Caco-2 (cell line): ENCODE measurements at regions of chr17 and their contacts with region 1.

Region 1: DNA sequence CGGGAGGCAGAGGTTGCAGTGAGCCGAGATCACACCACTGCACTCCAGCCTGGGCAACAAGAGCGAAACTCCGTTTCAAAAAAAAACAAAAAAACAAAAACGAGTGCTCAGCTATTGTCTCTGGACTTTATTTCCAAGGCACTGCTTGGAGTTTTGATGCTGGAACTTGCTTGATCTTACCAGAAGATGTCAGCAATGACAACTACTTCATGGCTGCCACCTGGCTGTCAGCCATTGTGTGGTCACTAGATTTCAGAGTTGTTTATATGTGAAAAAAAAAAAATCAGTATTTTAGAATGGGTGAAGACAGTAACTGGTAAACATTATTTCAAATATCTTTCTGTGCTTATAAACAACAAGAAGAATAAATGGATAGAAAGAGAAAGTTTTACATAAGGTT is 26.3 kb upstream of the OR4D1 start:
- DNase-seq: peak; percentile 46 to 56
- H3K4me3 ChIP-seq: no peak overlapping the region
- H3K4me3 Mint-ChIP-seq: no peak overlapping the region
- H3K27ac Mint-ChIP-seq: no peak overlapping the region
- H3K4me1 ChIP-seq: no peaks in the 10 kb centered on the region
- H3K4me1 Mint-ChIP-seq: no peaks in the 10 kb centered on the region
- H3K27me3 ChIP-seq: no peaks in the 10 kb centered on the region
- H3K27me3 Mint-ChIP-seq: peaks cover 17% of the 10 kb centered on the region
- CTCF ChIP-seq: peak; percentile 53 to 75

Region 2: GRCh38 chr17:58109196-58109595 is 12.7 kb before region 1 on chr17:
- CTCF ChIA-PET with region 1: no interaction called
- POLR2A ChIA-PET with region 1: no interaction called
- intact Hi-C with region 1: no loop called
- DNase-seq: no peak
- H3K4me3 ChIP-seq: no peak overlapping the region
- H3K4me3 Mint-ChIP-seq: no peak overlapping the region
- H3K27ac Mint-ChIP-seq: no peak overlapping the region
- H3K4me1 ChIP-seq: no peaks in the 10 kb centered on the region
- H3K4me1 Mint-ChIP-seq: no peaks in the 10 kb centered on the region
- H3K27me3 ChIP-seq: no peaks in the 10 kb centered on the region
- H3K27me3 Mint-ChIP-seq: peaks cover 3% of the 10 kb centered on the region
- CTCF ChIP-seq: no peak

Region 3: DNA sequence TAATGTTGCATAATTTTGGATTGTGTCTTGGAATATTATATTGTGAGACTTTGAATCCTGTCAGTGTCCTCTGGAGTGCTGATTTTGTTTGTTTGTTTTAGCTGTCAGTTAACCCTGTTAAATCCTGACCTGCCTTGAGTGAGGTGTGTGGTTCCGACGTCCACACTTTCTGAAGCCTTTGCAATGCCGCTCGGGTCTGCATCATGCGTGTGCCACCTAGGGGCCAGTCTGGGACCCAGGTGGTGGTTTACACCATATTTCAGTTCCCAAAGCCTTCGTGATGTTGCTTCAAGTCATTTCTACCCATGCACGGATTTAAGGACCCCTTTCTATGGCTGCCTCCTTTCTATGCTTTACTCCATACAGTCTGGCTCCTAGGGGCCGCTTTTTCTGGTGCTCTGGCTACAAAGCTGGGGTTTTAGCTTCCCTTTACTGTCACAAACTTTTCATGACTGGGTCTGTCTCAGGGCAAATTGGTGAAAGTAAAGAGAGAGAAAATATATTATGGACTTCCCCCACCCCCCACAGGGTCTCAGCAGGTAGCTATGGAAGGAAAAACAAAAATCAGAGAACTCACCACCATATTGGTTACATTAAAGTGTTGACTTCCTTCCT is 14.9 kb after region 1 on chr17:
- CTCF ChIA-PET with region 1: no interaction called
- POLR2A ChIA-PET with region 1: no interaction called
- intact Hi-C with region 1: loop called (anchors 1 kb)
- DNase-seq: peak in 1 of 2 experiments; percentile 51
- H3K4me3 ChIP-seq: no peak overlapping the region
- H3K4me3 Mint-ChIP-seq: no peak overlapping the region
- H3K27ac Mint-ChIP-seq: no peak overlapping the region
- H3K4me1 ChIP-seq: no peaks in the 10 kb centered on the region
- H3K4me1 Mint-ChIP-seq: no peaks in the 10 kb centered on the region
- H3K27me3 ChIP-seq: no peaks in the 10 kb centered on the region; the same call in 1 of the 2 replicates
- H3K27me3 Mint-ChIP-seq: peaks cover 34% of the 10 kb centered on the region
- CTCF ChIP-seq: peak; percentile 61 to 79

Region 4: GRCh38 chr17:58172369-58173071 is 50.6 kb after region 1 on chr17:
- CTCF ChIA-PET with region 1: interaction called, 7 read pairs
- POLR2A ChIA-PET with region 1: no interaction called
- intact Hi-C with region 1: loop called (anchors 1 kb)
- DNase-seq: peak in 1 of 2 experiments; percentile 58
- H3K4me3 ChIP-seq: no peak overlapping the region
- H3K4me3 Mint-ChIP-seq: no peak overlapping the region
- H3K27ac Mint-ChIP-seq: no peak overlapping the region
- H3K4me1 ChIP-seq: no peaks in the 10 kb centered on the region
- H3K4me1 Mint-ChIP-seq: no peaks in the 10 kb centered on the region
- H3K27me3 ChIP-seq: no peaks in the 10 kb centered on the region; the same call in 1 of the 2 replicates
- H3K27me3 Mint-ChIP-seq: peaks cover 33% of the 10 kb centered on the region
- CTCF ChIP-seq: peak; percentile 62 to 63

Region 5: DNA sequence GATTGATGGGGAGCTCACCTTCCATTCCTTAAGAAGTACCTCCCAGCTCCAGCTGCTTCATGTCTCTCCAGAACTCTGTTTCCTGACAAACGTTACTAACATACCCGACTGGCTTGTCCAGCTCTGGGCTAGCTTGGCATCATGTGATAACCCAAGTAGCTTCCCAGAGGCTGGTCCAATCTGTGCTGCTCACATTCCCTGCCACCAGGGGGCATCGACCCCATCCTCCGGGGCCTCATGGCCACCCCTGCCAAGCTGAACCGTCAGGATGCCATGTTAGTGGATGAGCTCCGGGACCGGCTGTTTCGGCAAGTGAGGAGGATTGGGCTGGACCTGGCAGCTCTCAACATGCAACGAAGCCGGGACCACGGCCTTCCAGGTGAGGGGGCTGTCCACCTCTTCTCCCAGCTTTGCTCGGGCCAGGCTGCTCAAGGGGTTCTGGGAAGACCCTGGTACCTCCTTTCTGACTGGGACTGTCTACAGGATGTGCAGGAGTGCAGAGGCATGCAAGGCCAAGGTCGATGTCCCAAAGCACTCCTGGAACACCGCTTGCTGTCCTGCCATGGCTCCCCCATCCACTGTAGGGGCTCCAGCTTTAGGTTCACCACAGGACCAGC is 78.2 kb after region 1 on chr17:
- CTCF ChIA-PET with region 1: no interaction called
- POLR2A ChIA-PET with region 1: no interaction called
- intact Hi-C with region 1: no loop called
- DNase-seq: peak; percentile 71 to 73
- H3K4me3 ChIP-seq: no peak overlapping the region
- H3K4me3 Mint-ChIP-seq: no peak overlapping the region
- H3K27ac Mint-ChIP-seq: no peak overlapping the region
- H3K4me1 ChIP-seq: no peaks in the 10 kb centered on the region
- H3K4me1 Mint-ChIP-seq: peaks cover 8% of the 10 kb centered on the region
- H3K27me3 ChIP-seq: no peaks in the 10 kb centered on the region
- H3K27me3 Mint-ChIP-seq: peaks cover 4% of the 10 kb centered on the region
- CTCF ChIP-seq: peak; percentile 51 to 53

Region 6: DNA sequence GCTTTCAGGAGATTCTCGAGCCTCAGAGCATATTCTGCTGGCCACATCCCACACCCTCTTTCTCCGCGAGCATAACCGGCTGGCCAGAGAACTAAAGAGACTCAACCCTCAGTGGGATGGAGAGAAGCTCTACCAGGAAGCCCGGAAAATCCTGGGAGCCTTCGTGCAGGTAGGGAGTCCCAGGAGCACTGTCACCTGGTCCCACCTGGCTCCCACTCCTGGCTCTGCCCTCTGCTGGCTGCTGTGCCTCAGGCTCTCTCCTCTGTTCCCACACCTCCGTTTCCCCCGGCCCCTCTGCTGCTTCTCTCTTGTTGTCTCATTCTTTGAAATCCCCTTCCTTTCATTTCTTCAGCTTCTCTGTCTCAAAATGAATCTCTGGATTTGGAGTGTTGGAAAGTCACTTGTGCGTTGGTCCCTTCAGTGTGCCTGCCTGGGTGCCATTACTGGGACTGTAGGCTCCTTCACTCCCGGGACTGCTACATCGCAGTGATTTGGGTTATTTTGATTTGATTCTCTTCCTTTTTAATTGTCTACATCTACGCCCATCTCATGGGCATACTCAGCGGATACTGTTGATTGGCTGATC is 133.0 kb after region 1 on chr17:
- CTCF ChIA-PET with region 1: interaction called, 3 read pairs
- POLR2A ChIA-PET with region 1: no interaction called
- intact Hi-C with region 1: loop called (anchors 1 kb)
- DNase-seq: peak in 1 of 2 experiments; percentile 51
- H3K4me3 ChIP-seq: no peak overlapping the region
- H3K4me3 Mint-ChIP-seq: no peak overlapping the region
- H3K27ac Mint-ChIP-seq: no peak overlapping the region
- H3K4me1 ChIP-seq: no peaks in the 10 kb centered on the region; the same call in 1 of the 2 replicates
- H3K4me1 Mint-ChIP-seq: no peaks in the 10 kb centered on the region
- H3K27me3 ChIP-seq: no peaks in the 10 kb centered on the region
- H3K27me3 Mint-ChIP-seq: peaks cover 17% of the 10 kb centered on the region
- CTCF ChIP-seq: peak; percentile 51 to 73